Activated CD4-positive, alpha-beta memory T cell treated with anti-CD3 and anti-CD28 coated beads for 36 hours (primary cell): ENCODE measurements at regions of chr1 and their contacts with region 1.

Region 1: DNA sequence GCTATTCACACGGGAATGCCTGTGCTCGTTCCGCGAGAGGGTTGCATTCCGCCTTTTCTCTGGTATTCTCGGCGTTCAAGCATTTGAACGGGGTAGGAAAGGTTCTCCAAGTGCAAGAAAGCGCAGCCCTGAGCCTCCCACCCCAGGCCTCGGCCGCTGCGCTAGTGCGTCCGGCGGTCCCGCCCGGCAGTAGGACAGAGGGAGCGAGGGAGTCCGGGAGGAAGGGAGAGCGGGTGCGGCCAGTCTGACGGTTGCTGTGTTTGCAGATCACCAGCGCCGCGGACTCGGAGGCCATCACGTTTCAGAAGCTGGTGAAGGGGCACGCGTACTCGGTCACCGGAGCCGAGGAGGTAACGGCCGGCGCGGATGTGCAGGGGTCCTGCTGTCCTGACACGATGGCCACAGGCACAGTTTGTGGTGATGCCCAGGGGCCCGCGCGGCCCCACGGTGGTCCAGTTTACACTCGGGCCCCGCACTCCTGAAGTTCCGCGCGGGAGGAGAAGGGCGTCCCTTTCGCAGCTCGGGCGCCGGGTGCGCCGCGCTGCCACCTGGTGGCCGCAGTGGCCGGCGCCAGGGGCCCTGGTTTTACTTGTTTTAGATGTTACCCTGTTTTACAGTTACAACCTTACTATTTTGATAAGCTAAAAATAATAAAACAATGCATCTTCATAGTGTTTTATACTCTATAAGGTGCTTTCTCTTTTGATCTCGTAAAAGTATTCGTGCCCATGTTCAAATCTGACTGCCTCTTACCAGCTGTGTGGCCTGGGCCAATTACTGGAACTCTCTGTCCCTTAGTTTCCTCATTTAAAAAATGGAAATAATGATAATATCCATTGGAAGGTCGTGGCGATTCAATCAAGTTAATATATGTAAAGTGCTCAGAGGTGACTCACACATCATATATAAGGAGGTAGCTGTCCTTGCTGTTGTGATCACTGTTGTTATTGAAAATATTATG is 36.7 kb downstream of the CAPN2 start:
- DNase-seq: peak; percentile 74
- H3K4me3 Mint-ChIP-seq: peak overlapping the region; percentile 42
- H3K27ac Mint-ChIP-seq: no peak overlapping the region
- H3K4me1 Mint-ChIP-seq: peaks cover 23% of the 10 kb centered on the region
- H3K27me3 Mint-ChIP-seq: no peaks in the 10 kb centered on the region

Region 2: DNA sequence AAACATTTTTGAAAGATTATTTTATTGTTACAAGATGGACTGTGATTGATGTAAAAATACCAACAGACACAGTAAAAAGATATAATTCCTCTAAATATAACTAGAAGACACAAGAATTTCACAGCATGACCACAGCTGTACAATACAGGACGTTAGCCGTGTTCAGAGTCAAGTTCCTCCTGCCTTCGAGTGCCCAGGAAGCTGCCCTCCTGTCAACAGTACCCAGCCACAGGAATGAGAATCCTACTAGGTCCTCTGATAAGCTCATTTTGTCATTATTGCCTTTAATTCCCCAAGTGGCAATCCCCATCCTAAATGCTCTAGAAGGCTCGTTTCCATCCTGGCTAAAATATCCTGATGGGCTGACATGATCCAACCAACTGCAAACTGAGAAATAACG is 53.1 kb before region 1 on chr1:
- CTCF ChIA-PET with region 1: interaction called, 189 read pairs
- POLR2A ChIA-PET with region 1: interaction called, 4 read pairs
- intact Hi-C with region 1: loop called (anchors 1 kb)
- DNase-seq: no peak
- H3K4me3 Mint-ChIP-seq: no peak overlapping the region
- H3K27ac Mint-ChIP-seq: no peak overlapping the region
- H3K4me1 Mint-ChIP-seq: peaks cover 9% of the 10 kb centered on the region
- H3K27me3 Mint-ChIP-seq: peaks cover 4% of the 10 kb centered on the region

Region 3: GRCh38 chr1:223712194-223712849 is 36.7 kb before region 1 on chr1 and contains the start of gene CAPN2:
- CTCF ChIA-PET with region 1: interaction called, 43 read pairs
- POLR2A ChIA-PET with region 1: interaction called, 8 read pairs
- intact Hi-C with region 1: loop called (anchors 1 kb)
- DNase-seq: peak; percentile 75
- H3K4me3 Mint-ChIP-seq: peak within 1 kb of the TSS; percentile 85
- H3K27ac Mint-ChIP-seq: peak within 1 kb of the TSS; percentile 80
- H3K4me1 Mint-ChIP-seq: peaks cover 58% of the 10 kb centered on the region
- H3K27me3 Mint-ChIP-seq: no peaks in the 10 kb centered on the region
- total RNA-seq, gene CAPN2: 61.2 to 64.5 TPM

Region 4: DNA sequence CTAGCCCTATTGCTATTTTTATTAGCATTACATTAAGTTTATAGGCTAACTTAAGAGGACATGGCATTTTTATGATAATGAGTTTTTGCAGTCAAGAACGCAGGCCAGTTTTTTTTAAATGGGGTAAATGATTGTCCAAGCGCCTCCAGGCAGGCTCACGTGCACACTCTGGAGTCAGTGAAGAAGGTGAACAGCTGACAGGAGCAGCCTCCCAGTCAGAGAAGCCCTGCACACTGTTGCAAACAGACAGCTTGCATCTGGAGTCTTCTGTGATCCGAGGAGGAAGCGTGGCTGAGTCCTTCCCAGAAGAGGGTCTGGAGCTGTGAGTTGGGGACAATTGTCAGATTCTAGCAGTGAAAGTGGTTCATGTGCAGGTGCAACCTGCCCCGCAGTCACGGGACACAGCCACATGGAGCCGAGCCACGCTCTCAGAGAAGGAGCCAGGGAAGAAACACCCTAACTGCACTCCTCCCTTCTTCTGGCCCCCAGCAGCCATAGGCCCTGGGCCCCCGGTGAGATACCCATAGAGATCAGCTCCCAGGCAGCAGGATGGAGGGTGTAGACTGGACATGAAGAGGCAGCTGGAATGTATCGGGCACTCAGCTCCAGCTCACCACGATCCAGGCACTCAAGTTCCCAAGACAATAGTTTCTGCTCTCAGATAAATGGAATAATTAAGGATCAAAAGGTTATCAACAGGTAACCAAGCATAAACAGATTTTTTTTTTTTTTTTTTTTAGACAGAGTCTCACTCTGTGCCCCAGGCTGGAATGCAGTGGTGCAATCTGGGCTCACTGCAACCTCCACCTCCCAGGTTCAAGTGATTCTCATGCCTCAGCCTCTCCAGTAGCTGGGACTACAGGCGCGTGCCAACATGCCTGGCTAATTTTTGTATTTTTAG is 10.3 kb before region 1 on chr1:
- CTCF ChIA-PET with region 1: interaction called, 20 read pairs
- POLR2A ChIA-PET with region 1: interaction called, 5 read pairs
- intact Hi-C with region 1: no loop called
- DNase-seq: no peak
- H3K4me3 Mint-ChIP-seq: no peak overlapping the region
- H3K27ac Mint-ChIP-seq: no peak overlapping the region
- H3K4me1 Mint-ChIP-seq: peaks cover 6% of the 10 kb centered on the region
- H3K27me3 Mint-ChIP-seq: no peaks in the 10 kb centered on the region

Region 5: GRCh38 chr1:223771814-223772770 is 23.0 kb after region 1 on chr1:
- CTCF ChIA-PET with region 1: interaction called, 27 read pairs
- POLR2A ChIA-PET with region 1: no interaction called
- intact Hi-C with region 1: no loop called
- DNase-seq: peak; percentile 35
- H3K4me3 Mint-ChIP-seq: no peak overlapping the region
- H3K27ac Mint-ChIP-seq: peak overlapping the region; percentile 70
- H3K4me1 Mint-ChIP-seq: peaks cover 44% of the 10 kb centered on the region
- H3K27me3 Mint-ChIP-seq: no peaks in the 10 kb centered on the region

Region 6: DNA sequence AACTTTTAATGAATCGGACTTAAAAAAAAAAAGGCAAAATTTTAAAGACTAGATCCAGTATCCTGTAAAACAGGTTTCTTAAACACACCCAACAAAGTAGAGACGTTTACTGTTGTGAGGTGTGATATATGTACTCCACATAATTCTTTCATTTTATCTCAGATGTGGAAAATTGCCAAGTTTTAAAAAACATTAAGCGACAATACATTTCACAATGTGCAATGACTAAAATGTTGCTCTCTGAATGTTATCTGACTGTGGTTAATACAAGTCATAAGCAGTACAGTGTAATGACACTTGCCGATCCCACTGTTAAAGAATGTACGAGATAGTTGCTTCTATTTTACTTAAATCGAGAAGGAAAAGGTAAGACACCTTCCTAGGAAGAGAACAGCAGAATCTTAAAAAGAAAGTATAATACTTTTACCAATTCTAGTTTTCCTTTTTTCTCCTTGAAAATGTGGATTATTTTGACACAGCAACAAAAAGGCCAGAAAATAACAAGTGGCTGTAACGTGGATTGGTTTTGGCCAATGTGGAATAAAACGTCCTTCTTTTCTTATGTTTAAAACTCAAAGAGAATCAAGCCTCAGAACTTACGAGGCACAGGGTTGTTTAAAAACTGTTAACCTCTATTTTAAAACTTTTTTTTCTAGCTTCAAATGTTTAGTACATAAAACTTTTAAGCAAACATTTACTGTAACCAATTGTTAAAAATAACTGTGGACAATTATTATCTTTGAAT is 45.3 kb after region 1 on chr1:
- CTCF ChIA-PET with region 1: no interaction called
- POLR2A ChIA-PET with region 1: no interaction called
- intact Hi-C with region 1: no loop called
- DNase-seq: no peak
- H3K4me3 Mint-ChIP-seq: no peak overlapping the region
- H3K27ac Mint-ChIP-seq: no peak overlapping the region
- H3K4me1 Mint-ChIP-seq: no peaks in the 10 kb centered on the region
- H3K27me3 Mint-ChIP-seq: no peaks in the 10 kb centered on the region